Posterior vena cava (tissue), 2 donors: ENCODE measurements at regions of chr4 and their contacts with region 1.

Region 1: DNA sequence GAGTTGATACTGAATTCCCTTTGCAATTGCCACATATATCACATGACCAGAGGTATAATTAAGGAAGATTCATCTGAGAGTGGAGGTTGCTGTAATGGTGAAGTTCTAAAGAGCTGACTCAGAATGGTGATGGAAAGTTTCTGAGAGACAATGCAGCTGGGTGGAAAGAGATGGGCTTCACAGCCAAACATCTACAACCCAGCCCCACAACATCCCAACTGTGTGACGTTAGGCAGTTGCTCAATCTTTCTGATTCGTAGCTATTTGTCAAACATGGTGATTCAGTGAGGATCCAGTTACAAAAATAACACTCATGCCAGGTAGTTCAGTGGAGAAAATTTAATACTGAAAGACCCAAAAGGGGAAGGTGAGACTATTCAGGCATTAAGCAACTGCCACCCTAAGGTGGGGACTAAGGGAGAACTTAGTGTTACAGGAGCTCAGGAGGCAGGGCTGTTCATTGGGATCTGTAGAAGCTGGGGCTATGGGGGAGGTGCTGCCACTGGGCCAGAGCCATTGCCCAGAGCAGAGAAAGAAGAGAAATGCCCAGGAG is 6.9 kb upstream of the AFF1 start:
- DNase-seq: no peak

Region 2: GRCh38 chr4:86831262-86832130 is 96.4 kb before region 1 on chr4:
- intact Hi-C with region 1: no loop called
- DNase-seq: no peak

Region 3: DNA sequence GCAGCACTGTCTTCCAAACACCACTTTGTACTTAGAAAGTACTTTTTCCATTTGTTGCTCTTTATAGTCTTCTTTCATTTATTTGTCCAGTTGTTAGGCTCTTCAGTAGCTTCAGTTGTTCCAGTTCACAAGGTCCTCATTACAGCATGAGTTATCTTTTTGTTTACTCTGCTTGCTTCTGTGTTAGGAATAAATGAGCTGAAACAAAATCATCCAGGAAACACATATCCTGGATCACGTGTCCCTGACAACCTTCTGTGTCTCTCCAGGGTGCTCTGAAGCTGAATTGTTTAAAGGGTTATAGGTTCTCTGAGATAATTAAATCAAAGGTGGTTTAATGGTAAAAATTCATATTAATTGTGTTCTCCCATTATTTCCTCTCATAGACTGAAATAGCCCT is 312.4 kb after region 1 on chr4:
- intact Hi-C with region 1: loop called in 1 of 2 experiments (anchors 5 kb)
- DNase-seq: no peak

Region 4: DNA sequence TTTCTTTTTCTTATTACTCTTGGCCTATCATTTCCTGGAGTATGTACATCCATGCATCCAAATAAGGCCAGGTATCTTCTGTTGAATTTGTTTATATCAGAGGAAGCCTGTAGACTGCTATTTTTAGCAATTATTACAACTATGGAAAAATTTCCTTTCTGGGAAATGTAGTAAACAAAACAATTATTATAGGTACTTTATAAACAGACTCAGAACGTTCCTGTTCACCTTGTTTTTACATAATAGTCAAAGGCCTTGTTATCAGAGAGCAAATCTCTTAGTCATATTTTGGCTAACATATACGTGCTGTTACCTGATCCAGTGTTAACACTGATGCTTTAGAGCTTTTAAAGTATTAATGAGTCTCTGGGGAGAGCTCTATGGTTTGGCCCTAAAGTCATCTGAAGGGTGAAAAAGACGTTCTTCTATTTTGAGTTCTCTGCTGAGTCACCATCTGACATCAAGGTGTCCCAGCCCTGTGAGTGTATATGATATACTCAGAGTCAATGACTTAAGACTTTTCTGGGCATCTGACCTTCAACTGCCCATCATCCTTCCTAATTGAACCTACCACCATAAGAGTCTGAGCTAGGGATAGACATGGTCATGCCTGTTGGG is 593.9 kb after region 1 on chr4:
- intact Hi-C with region 1: no loop called
- DNase-seq: no peak